Naive thymus-derived CD8-positive, alpha-beta T cell (primary cell): ENCODE measurements at regions of chr15 and their contacts with region 1.

Region 1: GRCh38 chr15:31326156-31326732 is 391 bp upstream of the KLF13 start:
- DNase-seq: peak; percentile 98 to 100 (median 100)
- ATAC-seq: peak; percentile 65 to 73
- H3K4me3 Mint-ChIP-seq: peak overlapping the region; percentile 50 to 91 (median 73)
- H3K27ac Mint-ChIP-seq: peak overlapping the region in 9 of 10 donors; percentile 35 to 97 (median 86)
- H3K4me1 Mint-ChIP-seq: peaks cover 33 to 73% (median 65%) of the 10 kb centered on the region in 4 donors
- H3K27me3 Mint-ChIP-seq: no peaks in the 10 kb centered on the region

Region 2: GRCh38 chr15:31049682-31050615 is 276.3 kb before region 1 on chr15:
- POLR2A ChIA-PET with region 1: no interaction called
- DNase-seq: no peak
- ATAC-seq: no peak
- H3K4me3 Mint-ChIP-seq: peak overlapping the region in 3 of 10 donors; percentile 17 to 57 (median 57)
- H3K27ac Mint-ChIP-seq: peak overlapping the region in 2 of 10 donors; percentile 37 to 68
- H3K4me1 Mint-ChIP-seq: peaks cover 6 to 39% (median 8%) of the 10 kb centered on the region in 4 donors
- H3K27me3 Mint-ChIP-seq: peaks cover 0 to 10% (median 0%) of the 10 kb centered on the region in 5 donors

Region 3: GRCh38 chr15:31200735-31201151 is 125.5 kb before region 1 on chr15:
- POLR2A ChIA-PET with region 1: interaction called, 23 read pairs
- DNase-seq: peak; percentile 53 to 88 (median 66)
- ATAC-seq: peak; percentile 78 to 84
- H3K4me3 Mint-ChIP-seq: no peak overlapping the region
- H3K27ac Mint-ChIP-seq: peak overlapping the region in 5 of 10 donors; percentile 14 to 80 (median 32)
- H3K4me1 Mint-ChIP-seq: peaks cover 8 to 32% (median 26%) of the 10 kb centered on the region in 4 donors
- H3K27me3 Mint-ChIP-seq: peaks cover 0 to 2% (median 0%) of the 10 kb centered on the region in 5 donors

Region 4: DNA sequence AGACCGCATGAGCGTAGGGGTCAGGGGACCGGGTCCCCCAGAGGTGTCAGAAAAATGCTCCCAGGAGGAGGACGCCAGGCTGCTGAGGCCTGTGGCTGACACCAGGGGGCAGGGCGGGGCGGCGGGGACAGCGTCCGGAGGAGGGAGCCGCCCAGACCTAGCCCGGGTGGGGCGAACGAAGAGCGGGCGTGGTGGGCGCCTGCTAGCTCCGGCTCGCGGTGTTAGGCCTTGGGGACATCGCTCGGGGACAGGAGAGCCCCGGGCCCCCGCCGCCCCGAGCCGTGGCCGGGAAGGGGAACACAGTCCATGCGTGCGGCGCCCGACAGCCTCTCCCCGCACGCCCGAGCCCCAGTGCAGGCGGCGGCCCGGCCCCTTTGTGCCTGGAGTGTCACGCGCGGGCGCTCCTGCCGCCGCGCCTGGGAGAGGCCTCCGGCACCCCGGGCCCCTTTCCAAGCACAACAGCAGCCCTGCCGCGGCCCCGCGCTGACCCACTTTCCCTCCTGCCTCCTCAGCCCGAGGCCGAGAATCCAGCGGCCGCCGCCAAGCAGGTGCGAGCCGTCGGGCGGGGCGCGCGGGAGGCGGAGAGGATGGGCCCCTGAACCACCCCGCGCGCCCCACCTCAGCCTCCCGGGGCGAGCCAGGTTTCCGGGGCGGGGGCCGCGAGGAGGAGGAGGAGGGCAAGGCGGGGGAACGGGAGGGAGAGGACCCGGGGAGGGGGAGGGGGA is 110.6 kb before region 1 on chr15:
- POLR2A ChIA-PET with region 1: interaction called, 95 read pairs
- DNase-seq: peak; percentile 52 to 84 (median 73)
- ATAC-seq: peak; percentile 72 to 78
- H3K4me3 Mint-ChIP-seq: peak overlapping the region; percentile 48 to 88 (median 68)
- H3K27ac Mint-ChIP-seq: peak overlapping the region in 9 of 10 donors; percentile 4 to 92 (median 85)
- H3K4me1 Mint-ChIP-seq: peaks cover 16 to 45% (median 35%) of the 10 kb centered on the region in 4 donors
- H3K27me3 Mint-ChIP-seq: no peaks in the 10 kb centered on the region

Region 5: DNA sequence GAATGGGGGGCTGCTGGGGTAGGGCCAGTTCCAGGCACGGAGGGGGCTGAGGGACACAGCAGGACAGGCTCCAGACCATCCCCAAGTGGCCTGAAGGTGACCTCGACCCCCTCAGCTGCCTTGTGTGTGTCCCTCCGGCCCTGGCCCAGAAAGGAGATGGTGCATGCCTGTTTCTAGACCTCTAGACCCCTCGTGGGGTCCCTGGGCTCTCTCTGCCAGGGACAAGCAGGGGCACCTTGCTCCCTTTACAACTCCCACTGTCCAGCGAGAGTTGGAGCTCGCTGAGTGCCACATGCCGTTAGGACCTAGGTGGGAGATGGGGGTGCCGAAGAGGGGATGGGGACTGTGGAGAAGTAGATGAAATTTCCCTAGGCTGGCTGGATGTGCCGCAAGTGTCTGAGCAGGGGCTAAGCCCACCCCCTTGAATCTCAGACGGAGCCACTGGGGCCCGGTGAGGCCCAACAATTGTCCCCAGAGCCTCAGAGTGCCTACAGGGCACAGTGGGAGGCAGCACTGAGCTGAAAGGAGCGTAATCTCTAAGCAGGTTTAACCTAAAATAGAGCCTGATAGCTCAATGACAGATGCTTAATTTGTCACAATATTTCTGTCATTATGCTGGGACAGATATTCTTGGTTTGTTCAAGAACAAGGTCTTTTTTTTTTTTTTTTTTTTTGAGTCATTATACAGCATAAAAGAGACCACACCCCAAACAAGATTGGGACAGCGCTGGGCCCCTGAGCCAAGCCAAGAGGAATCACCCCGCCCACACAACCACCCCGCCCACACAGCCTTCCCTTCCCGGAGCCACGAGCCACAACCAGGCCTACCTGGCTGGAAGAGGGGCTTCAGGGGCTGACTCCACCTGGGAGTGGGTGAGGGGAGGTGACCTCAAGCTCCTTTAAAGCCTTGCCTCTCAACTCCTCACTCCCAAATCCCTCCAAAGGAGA is 23.2 kb before region 1 on chr15:
- POLR2A ChIA-PET with region 1: interaction called, 20 read pairs
- DNase-seq: peak in 3 of 10 donors; percentile 18 to 40 (median 37)
- ATAC-seq: peak; percentile 76
- H3K4me3 Mint-ChIP-seq: peak overlapping the region in 2 of 10 donors; percentile 24 to 27
- H3K27ac Mint-ChIP-seq: peak overlapping the region in 7 of 10 donors; percentile 29 to 81 (median 68)
- H3K4me1 Mint-ChIP-seq: peaks cover 19 to 46% (median 43%) of the 10 kb centered on the region in 4 donors
- H3K27me3 Mint-ChIP-seq: peaks cover 0 to 2% (median 0%) of the 10 kb centered on the region in 5 donors

Region 6: GRCh38 chr15:31365655-31366127 is 39.4 kb after region 1 on chr15:
- POLR2A ChIA-PET with region 1: interaction called, 915 read pairs
- DNase-seq: peak; percentile 66 to 92 (median 82)
- ATAC-seq: peak; percentile 48 to 61
- H3K4me3 Mint-ChIP-seq: peak overlapping the region; percentile 79 to 95 (median 88)
- H3K27ac Mint-ChIP-seq: peak overlapping the region; percentile 96 to 100 (median 98)
- H3K4me1 Mint-ChIP-seq: peaks cover 59 to 100% (median 99%) of the 10 kb centered on the region in 4 donors
- H3K27me3 Mint-ChIP-seq: no peaks in the 10 kb centered on the region

Region 7: DNA sequence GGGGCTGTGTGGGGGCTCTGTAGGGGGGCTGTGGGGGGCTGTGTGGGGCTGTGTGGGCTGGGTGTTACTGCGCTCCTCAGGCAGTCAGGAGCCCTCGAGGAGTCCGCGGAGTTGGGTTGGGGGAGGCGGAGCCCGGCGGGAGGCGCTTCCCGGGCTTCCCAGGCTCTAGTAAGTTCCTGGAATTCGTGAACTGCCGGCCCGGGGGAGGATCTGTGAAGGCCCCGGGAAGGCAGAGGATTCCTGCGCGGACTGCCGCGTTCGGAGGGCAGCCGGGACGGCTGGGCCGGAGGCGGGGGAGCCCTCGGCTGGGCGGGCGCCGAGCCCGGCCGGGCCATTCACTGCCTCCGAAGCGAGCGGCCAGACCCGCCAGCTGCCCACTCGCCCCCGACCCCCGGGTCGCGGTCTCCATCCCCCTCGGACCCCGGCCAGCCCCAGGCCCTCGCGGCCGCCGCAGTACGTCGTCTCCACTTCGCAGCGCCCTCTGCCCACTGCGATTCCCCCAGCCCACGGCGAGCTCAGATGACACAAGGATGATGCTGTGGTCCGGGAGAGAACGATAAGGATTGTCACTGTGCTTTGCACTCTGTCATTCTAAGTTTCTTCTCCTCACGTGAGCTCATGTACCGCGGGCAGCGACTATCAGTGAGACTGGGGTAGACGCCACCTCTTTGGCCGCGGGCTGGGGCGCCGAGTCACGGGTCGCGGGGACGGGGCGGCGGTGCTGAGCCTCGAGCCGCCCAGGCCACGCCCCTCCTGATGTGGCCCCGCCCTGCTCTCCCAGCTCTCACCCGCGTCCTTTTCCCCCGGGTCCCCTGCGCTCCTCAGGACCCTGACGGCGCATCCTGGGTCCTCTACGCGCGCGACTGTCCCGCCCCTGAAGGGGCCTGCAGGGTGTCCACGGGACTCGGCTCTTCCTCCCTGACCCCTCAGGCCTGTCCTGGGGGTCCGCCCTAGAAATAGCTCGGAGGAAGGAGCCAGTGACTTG is 65.7 kb after region 1 on chr15:
- POLR2A ChIA-PET with region 1: interaction called, 21 read pairs
- DNase-seq: peak; percentile 69 to 88 (median 81)
- ATAC-seq: peak; percentile 74 to 83
- H3K4me3 Mint-ChIP-seq: peak overlapping the region; percentile 86 to 97 (median 95)
- H3K27ac Mint-ChIP-seq: peak overlapping the region; percentile 79 to 98 (median 97)
- H3K4me1 Mint-ChIP-seq: peaks cover 35 to 67% (median 57%) of the 10 kb centered on the region in 4 donors
- H3K27me3 Mint-ChIP-seq: no peaks in the 10 kb centered on the region

Region 8: GRCh38 chr15:31483053-31483985 is 157.1 kb after region 1 on chr15:
- POLR2A ChIA-PET with region 1: interaction called, 56 read pairs
- DNase-seq: peak; percentile 33 to 76 (median 50)
- ATAC-seq: peak; percentile 72 to 79
- H3K4me3 Mint-ChIP-seq: peak overlapping the region; percentile 90 to 98 (median 97)
- H3K27ac Mint-ChIP-seq: peak overlapping the region; percentile 89 to 98 (median 96)
- H3K4me1 Mint-ChIP-seq: peaks cover 31 to 69% (median 60%) of the 10 kb centered on the region in 4 donors
- H3K27me3 Mint-ChIP-seq: peaks cover 0 to 6% (median 0%) of the 10 kb centered on the region in 5 donors